ENCODE measurements at regions of chr9 and their contacts with region 1.

Region 1: DNA sequence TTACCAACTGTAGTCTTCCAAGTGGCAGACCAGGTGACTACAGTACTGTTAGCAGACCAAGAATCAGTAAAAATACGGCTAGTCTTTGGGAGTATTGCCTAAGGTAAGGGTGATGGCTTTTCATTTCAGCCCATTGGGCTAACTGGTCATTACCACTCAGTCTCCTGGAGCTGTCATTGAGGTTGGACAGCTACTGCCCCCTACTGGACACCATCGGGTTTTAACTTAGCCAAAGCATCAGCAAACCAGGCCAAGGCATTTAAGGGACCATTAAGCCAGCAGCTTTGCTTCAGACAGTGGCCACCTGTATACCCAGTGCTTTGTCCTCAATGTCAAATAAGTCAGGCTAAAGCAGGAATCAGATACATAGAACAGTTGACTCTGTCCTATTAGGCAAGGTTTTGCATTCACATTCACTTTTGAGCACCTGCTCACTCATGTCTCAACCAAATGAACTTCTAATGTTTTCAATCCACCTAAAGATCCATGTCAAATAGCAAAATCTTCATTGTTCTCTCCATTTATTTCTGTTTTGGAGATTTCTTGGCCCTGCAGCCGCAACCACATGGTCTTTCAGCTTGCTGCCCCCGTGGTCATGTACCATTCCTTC is 117.2 kb downstream of the INVS start:
- DNase-seq: peak; percentile 46
- H3K4me3 Mint-ChIP-seq: no peak overlapping the region
- H3K27ac Mint-ChIP-seq: no peak overlapping the region
- H3K4me1 Mint-ChIP-seq: peaks cover 12% of the 10 kb centered on the region
- H3K27me3 Mint-ChIP-seq: no peaks in the 10 kb centered on the region

Region 2: DNA sequence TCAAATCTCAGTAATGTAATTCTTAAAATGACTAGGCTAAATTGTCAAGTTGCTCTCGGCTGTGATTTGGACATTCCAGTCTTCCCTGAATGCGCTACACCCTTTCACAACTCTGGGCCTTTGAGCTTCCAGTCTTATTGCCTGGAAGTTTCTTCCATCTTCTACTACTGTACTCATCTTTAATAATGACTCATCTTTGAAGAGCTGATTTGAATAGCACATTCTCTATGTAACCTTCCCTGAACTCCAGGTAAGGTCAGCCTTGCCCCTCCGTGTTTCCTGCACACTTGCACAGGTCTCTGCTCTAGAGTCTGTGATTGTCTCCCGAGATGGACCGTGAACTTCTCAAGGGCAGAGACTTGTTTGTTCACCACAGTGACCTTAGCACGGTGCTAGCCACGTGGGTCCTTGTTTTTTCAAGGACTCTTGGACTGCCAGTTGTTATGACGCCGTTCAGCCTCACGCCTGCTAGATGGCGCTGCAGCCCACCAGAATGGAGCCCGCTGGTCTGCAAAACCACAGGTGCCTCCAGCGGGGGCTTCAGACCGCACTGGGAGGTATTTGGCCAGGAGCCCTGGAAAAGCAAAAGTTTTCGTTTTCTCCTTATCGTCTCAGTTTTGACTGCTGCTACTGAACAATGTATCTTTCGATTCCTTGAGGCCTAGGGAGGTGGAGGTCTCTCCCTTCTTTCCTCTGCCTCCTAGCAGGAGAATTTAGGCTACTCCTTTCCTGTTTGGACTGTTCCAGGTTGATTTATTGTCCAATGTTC is 949.8 kb before region 1 on chr9:
- intact Hi-C with region 1: loop called (anchors 2 kb)
- DNase-seq: peak; percentile 50
- H3K4me3 Mint-ChIP-seq: peak overlapping the region; percentile 3
- H3K27ac Mint-ChIP-seq: no peak overlapping the region
- H3K4me1 Mint-ChIP-seq: peaks cover 14% of the 10 kb centered on the region
- H3K27me3 Mint-ChIP-seq: peaks cover 14% of the 10 kb centered on the region

Region 3: GRCh38 chr9:99851500-99851822 is 364.8 kb before region 1 on chr9:
- intact Hi-C with region 1: loop called (anchors 10 kb)
- DNase-seq: peak; percentile 64
- H3K4me3 Mint-ChIP-seq: peak overlapping the region; percentile 38
- H3K27ac Mint-ChIP-seq: peak overlapping the region; percentile 77
- H3K4me1 Mint-ChIP-seq: peaks cover 62% of the 10 kb centered on the region
- H3K27me3 Mint-ChIP-seq: peaks cover 4% of the 10 kb centered on the region

Region 4: DNA sequence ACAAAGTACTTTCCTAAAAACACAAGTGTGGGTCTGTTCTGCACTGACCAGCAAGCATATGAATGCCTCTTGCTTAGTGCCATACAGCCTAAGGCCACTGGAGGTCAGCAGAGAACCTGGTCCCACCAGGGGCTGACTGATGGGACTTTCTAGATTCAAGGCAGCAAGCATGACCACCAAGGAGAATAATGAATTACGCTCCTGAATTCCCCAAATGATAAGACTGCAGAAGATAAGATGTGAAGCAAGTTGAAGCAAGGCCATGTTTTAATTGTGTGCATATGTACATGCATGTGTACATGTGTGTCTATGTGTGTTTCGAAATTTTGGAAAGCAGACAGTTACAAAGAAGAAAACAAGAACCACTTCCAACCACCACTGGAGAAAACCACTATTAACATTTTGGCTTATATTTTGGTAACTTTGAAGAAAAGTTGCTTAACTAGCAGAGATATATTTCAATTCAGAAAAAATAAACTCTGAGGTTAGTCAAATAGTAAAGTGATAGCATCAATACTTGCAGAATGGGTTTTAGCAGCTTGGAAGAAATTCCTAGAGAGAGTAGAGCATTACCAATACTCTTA is 188.0 kb before region 1 on chr9:
- intact Hi-C with region 1: loop called (anchors 1 kb)
- DNase-seq: peak; percentile 43
- H3K4me3 Mint-ChIP-seq: no peak overlapping the region
- H3K27ac Mint-ChIP-seq: no peak overlapping the region
- H3K4me1 Mint-ChIP-seq: peaks cover 14% of the 10 kb centered on the region
- H3K27me3 Mint-ChIP-seq: no peaks in the 10 kb centered on the region

Region 5: GRCh38 chr9:100058699-100059579 is 157.3 kb before region 1 on chr9:
- intact Hi-C with region 1: no loop called
- DNase-seq: no peak
- H3K4me3 Mint-ChIP-seq: no peak overlapping the region
- H3K27ac Mint-ChIP-seq: no peak overlapping the region
- H3K4me1 Mint-ChIP-seq: no peaks in the 10 kb centered on the region
- H3K27me3 Mint-ChIP-seq: no peaks in the 10 kb centered on the region

Region 6: DNA sequence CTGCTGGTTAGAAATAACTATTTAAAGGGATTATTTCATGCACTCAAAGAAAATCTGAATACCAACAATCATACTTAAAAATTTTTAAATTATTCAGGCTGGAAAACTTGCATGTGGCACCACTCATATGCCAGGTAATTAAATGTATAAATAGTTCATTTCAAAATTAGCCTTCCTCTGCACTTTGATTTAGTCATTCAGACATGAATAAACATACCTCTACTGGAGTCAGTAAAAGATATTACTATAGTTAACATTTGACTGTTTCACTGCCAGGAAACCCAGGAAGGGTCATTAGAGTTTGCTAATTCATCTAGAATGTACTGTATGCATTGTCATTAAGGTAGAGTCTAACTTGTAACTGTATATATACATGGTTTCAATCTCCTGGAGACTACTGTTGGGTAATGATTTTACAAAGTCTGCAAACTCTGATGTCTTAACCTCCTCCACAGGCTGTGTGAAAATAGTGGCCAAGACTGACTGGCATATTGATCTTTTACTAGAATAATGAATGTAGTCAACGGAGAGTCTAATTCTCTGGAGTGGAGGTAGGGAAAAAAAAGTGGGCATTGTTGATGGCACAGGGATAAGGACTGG is 92.8 kb after region 1 on chr9:
- intact Hi-C with region 1: no loop called
- DNase-seq: no peak
- H3K4me3 Mint-ChIP-seq: no peak overlapping the region
- H3K27ac Mint-ChIP-seq: no peak overlapping the region
- H3K4me1 Mint-ChIP-seq: no peaks in the 10 kb centered on the region
- H3K27me3 Mint-ChIP-seq: no peaks in the 10 kb centered on the region

Region 7: GRCh38 chr9:100322954-100323536 is 106.8 kb after region 1 on chr9:
- intact Hi-C with region 1: loop called (anchors 5 kb)
- DNase-seq: no peak
- H3K4me3 Mint-ChIP-seq: no peak overlapping the region
- H3K27ac Mint-ChIP-seq: no peak overlapping the region
- H3K4me1 Mint-ChIP-seq: peaks cover 5% of the 10 kb centered on the region
- H3K27me3 Mint-ChIP-seq: no peaks in the 10 kb centered on the region